ENCODE measurements at regions of chr21 and their contacts with region 1.

Region 1: GRCh38 chr21:25039461-25040380 is 567.6 kb downstream of the MRPL39 start:
- DNase-seq: peak; percentile 57
- H3K4me3 ChIP-seq: no peak overlapping the region
- CTCF ChIP-seq: peak; percentile 38

Region 2: GRCh38 chr21:24976238-24976637 is 63.5 kb before region 1 on chr21:
- in situ Hi-C with region 1: no loop called
- DNase-seq: no peak
- H3K4me3 ChIP-seq: no peak overlapping the region
- CTCF ChIP-seq: no peak

Region 3: GRCh38 chr21:25079053-25079452 is 39.3 kb after region 1 on chr21:
- in situ Hi-C with region 1: loop called (anchors 5 kb)
- DNase-seq: no peak
- H3K4me3 ChIP-seq: no peak overlapping the region
- CTCF ChIP-seq: no peak

Region 4: DNA sequence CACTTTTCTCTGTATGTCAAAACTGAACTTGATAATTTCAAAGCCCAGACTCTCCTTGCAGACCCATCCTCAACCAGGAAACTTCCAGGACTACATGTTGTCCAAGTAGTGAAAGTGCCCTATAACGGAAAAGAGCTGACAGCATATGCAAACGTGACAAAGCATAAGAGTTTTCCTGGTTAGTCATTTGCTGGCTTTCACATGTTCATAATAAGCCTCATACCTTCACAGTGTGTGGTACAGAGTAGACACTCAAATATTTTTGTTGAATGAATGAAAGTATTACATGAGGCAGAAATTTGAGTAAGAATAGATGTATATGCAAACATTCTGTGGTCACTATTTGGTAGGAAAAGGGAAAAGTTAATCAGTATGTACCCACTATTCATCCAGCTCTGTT is 94.2 kb after region 1 on chr21:
- in situ Hi-C with region 1: no loop called
- DNase-seq: peak; percentile 78
- H3K4me3 ChIP-seq: no peak overlapping the region
- CTCF ChIP-seq: no peak